ENCODE measurements at regions of chr22 and their contacts with region 1.

Region 1: DNA sequence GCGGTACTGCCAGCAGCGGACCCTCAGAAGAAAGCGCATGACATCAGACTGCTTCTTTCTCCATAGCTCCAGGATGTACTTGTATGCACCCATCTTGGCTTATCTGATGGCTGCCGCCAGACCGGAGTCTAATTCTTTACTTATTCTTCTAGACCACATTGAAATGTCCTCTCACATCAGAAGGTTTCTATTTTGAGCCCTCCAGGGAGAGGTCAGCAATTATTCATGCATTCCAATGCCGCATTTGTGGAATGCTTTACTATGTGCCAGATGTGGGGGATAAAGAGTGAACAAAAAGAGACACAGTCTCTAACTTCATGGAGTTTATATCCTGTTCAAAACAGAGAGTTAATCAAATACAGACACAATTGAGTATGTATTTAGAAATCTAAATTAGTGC is 230.1 kb downstream of the MIAT start:
- DNase-seq: peak in 1 of 2 donors; percentile 75
- H3K4me3 ChIP-seq: peak overlapping the region in 1 of 2 donors; percentile 4
- H3K27ac ChIP-seq: peak overlapping the region; percentile 87 to 95
- H3K4me1 ChIP-seq: peaks cover 4 to 59% of the 10 kb centered on the region in 2 donors
- H3K27me3 ChIP-seq: no peaks in the 10 kb centered on the region
- CTCF ChIP-seq: no peak

Region 2: DNA sequence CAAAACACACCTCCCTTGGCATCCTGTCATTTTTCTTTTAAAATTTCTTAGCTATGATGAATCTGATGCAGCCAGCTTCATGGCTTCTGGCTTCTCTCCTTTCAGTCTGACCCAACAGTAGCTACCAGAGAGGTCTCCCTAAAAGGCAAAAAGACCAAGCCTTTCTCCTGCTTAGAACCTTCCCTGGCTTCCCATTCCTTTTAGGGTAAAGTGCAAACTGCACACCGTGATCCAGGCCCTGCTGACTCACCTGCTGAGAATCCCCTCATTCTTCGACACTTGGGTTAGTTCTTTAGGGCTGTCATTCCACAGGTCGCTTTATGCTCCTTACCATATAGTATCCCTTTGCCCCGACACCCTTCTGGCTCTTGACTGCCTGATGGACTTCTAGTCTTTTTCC is 132.4 kb after region 1 on chr22:
- intact Hi-C with region 1: loop called (anchors 5 kb)
- DNase-seq: peak; percentile 24 to 79
- H3K4me3 ChIP-seq: no peak overlapping the region
- H3K27ac ChIP-seq: peak overlapping the region; percentile 80 to 83
- H3K4me1 ChIP-seq: peaks cover 0 to 8% of the 10 kb centered on the region in 2 donors
- H3K27me3 ChIP-seq: no peaks in the 10 kb centered on the region
- CTCF ChIP-seq: no peak

Region 3: GRCh38 chr22:27107824-27108223 is 220.4 kb after region 1 on chr22:
- intact Hi-C with region 1: loop called (anchors 2 kb)
- DNase-seq: peak; percentile 21 to 90
- H3K4me3 ChIP-seq: no peak overlapping the region
- H3K27ac ChIP-seq: peak overlapping the region; percentile 68 to 76
- H3K4me1 ChIP-seq: peaks cover 11 to 60% of the 10 kb centered on the region in 2 donors
- H3K27me3 ChIP-seq: no peaks in the 10 kb centered on the region
- CTCF ChIP-seq: no peak

Region 4: GRCh38 chr22:27170491-27170890 is 283.0 kb after region 1 on chr22:
- intact Hi-C with region 1: loop called (anchors 5 kb)
- DNase-seq: peak; percentile 60 to 94
- H3K4me3 ChIP-seq: no peak overlapping the region
- H3K27ac ChIP-seq: peak overlapping the region; percentile 53 to 55
- H3K4me1 ChIP-seq: peaks cover 0 to 9% of the 10 kb centered on the region in 2 donors
- H3K27me3 ChIP-seq: no peaks in the 10 kb centered on the region
- CTCF ChIP-seq: no peak

Region 5: GRCh38 chr22:27212617-27213177 is 325.2 kb after region 1 on chr22:
- intact Hi-C with region 1: loop called (anchors 5 kb)
- DNase-seq: peak; percentile 72 to 93
- H3K4me3 ChIP-seq: no peak overlapping the region
- H3K27ac ChIP-seq: peak overlapping the region; percentile 72 to 84
- H3K4me1 ChIP-seq: peaks cover 11 to 30% of the 10 kb centered on the region in 2 donors
- H3K27me3 ChIP-seq: no peaks in the 10 kb centered on the region
- CTCF ChIP-seq: no peak

Region 6: DNA sequence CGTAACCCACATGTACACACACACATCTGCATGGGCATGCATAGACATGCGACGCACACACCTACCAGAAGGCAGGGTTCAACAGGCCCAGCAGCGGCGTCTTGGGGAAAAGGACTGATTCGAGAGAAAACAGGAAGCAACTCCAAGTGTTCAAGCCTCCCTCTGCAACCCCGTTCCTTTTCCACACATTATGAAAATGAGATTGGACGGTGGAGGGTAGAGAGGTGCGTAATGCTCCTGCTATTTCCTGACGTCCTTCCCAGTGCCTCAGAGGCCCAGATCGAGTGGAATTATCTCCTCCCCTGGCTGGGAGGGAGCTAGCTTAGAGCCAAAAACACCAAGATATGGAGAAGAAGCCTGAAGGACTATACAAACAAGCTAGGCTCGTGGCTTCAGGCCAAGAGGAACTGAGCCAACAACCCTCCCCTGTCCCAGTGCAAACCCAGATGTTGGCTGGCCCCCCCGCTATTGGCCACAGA is 624.9 kb after region 1 on chr22:
- intact Hi-C with region 1: loop called (anchors 10 kb)
- DNase-seq: peak in 1 of 2 donors; percentile 94
- H3K4me3 ChIP-seq: no peak overlapping the region
- H3K27ac ChIP-seq: peak overlapping the region; percentile 58 to 80
- H3K4me1 ChIP-seq: peaks cover 6 to 31% of the 10 kb centered on the region in 2 donors
- H3K27me3 ChIP-seq: no peaks in the 10 kb centered on the region
- CTCF ChIP-seq: no peak

Measured in ascending aorta (tissue), 2 donors.